Astrocyte of the cerebellum (primary cell): ENCODE measurements at regions of chr7 and their contacts with region 1.

Region 1: DNA sequence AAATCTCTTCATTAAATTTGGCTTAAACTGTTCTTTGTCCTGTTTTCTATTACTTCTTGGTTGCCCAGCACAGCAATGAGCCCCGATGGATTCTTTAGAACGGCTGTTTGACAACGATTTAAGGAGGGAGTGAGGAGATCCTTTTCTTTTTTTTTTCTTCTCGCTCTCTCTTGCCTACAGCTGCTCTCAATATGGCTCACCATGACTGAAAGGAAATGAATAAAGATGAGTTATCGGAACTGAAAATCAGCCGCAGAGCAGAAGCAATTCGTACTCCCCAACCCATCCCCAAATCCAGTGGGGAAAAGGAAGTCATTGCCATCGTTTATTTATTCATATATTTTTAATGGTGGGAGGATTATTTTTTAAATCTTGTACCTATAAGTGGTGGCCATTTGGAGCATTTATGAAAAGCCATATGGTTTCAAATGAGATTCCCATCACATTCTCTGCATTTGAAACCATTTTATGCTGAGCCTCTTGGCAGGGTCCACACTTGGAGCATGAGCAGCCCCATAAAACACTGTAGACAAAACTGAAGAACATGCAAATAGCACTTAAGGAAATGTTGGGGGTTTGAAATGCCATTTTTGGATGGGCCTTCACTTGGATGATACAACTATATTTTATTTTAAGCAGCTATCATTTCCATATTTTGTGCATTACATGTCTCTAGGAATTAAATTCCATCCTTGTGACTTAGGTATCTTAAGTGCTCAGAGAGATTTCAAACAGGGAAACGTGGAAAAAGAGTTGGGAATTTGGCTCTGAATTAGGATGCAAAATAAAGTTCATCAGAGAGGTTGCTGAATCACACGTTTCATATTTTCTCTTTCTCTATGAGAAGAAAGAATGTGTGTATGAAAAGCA is 107.7 kb upstream of the FZD1 start:
- DNase-seq: no peak
- H3K4me3 ChIP-seq: no peak overlapping the region
- CTCF ChIP-seq: no peak

Region 2: DNA sequence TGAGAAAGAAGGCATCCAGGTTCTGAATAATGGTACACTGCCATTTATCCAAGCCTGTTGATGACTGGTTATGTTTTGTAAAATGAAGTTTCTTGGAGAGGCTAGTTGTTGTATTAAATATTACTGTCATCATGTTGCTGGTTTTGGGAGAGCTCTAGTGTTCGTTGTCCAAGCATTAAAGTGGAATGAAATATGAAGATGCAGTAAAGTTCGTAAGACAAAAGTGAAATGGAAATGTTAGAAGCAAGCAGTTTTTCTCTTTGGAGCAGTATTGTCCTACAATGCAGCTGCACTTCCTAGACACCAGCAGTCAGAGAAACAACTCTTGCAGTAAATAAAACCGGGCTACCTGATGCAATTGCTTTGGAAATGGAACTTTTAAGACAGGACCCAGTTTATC is 49.1 kb before region 1 on chr7:
- in situ Hi-C with region 1: loop called (anchors 5 kb)
- DNase-seq: no peak
- H3K4me3 ChIP-seq: no peak overlapping the region
- CTCF ChIP-seq: no peak